Left ventricle myocardium inferior (tissue), 1 donor: ENCODE measurements at regions of chr22 and their contacts with region 1.

Region 1: DNA sequence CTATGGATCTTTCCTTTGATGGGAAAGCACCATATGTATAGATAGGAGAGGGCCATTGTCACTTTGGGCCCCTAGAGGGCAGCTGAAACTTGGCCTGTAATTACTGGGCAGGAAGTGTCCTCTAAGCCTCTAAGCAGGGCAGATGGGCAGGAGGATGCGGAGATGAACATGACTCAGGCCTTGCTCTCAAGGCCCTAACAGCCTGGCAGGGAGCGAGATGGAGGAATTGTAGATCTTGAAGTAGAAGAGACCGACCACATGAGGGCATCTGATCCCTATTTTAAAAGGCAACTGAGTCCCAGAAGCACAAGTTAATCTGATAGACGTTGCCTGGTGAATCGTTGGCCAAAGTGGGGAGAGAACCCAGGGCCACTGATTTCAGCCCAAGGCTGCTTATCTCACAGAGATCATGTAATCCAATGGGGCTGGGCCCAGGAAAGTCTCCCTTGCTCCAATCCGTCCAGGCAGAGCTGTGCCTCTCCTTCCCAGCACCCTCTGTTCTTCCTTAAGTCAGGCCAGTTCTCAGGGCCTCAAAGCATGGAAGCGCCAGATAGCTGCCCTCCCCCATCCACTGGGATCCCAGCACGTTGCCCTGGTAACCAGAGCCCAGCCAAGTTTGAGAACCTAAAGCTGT is 2.5 kb upstream of the SEPTIN3 start:
- DNase-seq: no peak
- H3K4me3 ChIP-seq: no peak overlapping the region
- H3K27ac ChIP-seq: no peak overlapping the region
- H3K4me1 ChIP-seq: no peaks in the 10 kb centered on the region
- H3K27me3 ChIP-seq: peaks cover 30% of the 10 kb centered on the region
- CTCF ChIP-seq: peak; percentile 48

Region 2: GRCh38 chr22:42444077-42444904 is 477.6 kb after region 1 on chr22:
- intact Hi-C with region 1: loop called (anchors 5 kb)
- DNase-seq: peak; percentile 86
- H3K4me3 ChIP-seq: peak overlapping the region; percentile 59
- H3K27ac ChIP-seq: peak overlapping the region; percentile 77
- H3K4me1 ChIP-seq: peaks cover 29% of the 10 kb centered on the region
- H3K27me3 ChIP-seq: peaks cover 54% of the 10 kb centered on the region
- CTCF ChIP-seq: peak; percentile 65